PC-3 (cell line): ENCODE measurements at regions of chr1 and their contacts with region 1.

Region 1: GRCh38 chr1:205711104-205712020 is 31.1 kb upstream of the SLC45A3 start:
- DNase-seq: peak; percentile 93
- ATAC-seq: peak; percentile 86
- H3K4me3 ChIP-seq: no peak overlapping the region
- H3K27ac ChIP-seq: no peak overlapping the region
- H3K4me1 ChIP-seq: peaks cover 9% of the 10 kb centered on the region; the same call in 1 of the 2 replicates
- H3K27me3 ChIP-seq: no peaks in the 10 kb centered on the region
- CTCF ChIP-seq: peak; percentile 99

Region 2: DNA sequence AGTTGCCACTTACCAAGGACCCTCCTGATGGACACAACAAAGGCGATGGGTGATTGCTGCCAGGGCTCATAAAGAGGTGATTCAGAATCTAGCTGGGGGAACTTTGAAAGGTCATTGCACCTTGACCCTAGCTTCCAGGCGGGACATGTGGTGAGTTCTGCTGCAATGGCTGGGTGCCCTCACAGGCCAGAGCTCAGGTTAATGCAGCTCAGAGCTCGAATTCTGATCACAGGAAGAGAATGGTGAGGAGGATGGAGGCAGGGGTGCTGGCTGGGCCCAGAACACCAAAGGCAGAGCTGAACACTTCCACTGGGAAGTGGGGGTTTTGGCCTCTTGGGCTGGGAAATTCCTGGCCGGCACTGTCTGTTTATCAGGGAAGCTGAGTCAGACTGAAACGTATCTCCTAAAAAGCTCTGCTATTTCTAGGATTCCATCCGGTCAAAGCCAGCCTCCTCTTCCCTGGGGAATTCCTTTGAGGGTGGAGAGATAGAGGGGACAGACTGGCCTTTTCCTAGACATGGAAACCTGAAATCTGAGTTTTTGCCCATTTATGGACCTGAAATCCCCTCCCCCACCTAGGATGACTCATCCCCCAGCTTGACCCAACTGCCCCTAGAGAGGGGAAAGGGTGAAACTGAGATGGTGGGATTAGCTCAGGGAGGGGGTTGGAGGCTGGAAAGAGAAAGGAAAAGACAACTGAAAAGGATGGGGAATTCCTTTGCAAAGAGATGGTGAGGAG is 417.0 kb before region 1 on chr1:
- CTCF ChIA-PET with region 1: no interaction called
- POLR2A ChIA-PET with region 1: no interaction called
- intact Hi-C with region 1: no loop called
- DNase-seq: peak; percentile 87
- ATAC-seq: peak; percentile 67
- H3K4me3 ChIP-seq: no peak overlapping the region
- H3K27ac ChIP-seq: peak overlapping the region; percentile 73
- H3K4me1 ChIP-seq: peaks cover 44% of the 10 kb centered on the region
- H3K27me3 ChIP-seq: no peaks in the 10 kb centered on the region
- CTCF ChIP-seq: no peak

Region 3: DNA sequence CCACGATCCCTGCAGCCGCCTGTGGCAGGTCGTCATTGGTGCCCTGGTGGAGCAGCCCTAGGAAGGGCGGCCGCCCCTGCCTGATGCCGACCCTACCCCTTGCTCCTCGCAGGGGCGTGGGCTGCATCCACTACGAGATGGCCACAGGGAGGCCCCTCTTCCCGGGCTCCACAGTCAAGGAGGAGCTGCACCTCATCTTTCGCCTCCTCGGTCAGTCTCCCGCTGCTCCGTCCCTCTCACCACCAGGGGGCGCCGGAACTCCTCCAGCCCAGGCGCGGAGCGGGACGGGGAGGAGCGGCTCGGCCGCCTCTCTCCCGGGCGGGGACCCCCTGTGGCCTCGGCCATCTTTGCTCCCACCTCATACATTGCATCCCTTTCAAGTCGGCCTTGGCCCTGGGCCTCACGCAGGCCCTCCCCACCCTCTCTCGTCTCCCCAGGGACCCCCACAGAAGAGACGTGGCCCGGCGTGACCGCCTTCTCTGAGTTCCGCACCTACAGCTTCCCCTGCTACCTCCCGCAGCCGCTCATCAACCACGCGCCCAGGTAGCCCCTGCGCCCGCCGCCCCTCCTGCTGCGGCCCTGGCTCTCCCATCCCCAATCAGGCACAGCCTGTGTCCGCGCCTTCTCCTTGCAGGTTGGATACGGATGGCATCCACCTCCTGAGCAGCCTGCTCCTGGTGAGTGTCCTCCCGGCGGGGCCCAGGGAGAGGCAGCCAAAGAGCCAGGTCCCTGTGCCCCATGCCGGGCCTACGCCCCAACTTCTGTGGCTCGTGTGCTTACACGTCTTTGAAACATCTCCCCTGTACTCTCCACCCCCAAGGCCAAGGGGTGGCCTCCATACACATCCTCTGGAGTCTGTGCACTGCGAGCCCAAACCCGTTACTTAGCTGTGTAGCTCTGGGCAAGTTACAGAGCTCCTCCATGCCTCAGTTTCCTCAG is 182.2 kb before region 1 on chr1:
- CTCF ChIA-PET with region 1: interaction called, 6 read pairs
- POLR2A ChIA-PET with region 1: no interaction called
- intact Hi-C with region 1: loop called (anchors 1 kb)
- DNase-seq: peak; percentile 92
- ATAC-seq: peak; percentile 94
- H3K4me3 ChIP-seq: peak overlapping the region; percentile 60
- H3K27ac ChIP-seq: no peak overlapping the region
- H3K4me1 ChIP-seq: peaks cover 12% of the 10 kb centered on the region
- H3K27me3 ChIP-seq: no peaks in the 10 kb centered on the region
- CTCF ChIP-seq: peak; percentile 97

Region 4: DNA sequence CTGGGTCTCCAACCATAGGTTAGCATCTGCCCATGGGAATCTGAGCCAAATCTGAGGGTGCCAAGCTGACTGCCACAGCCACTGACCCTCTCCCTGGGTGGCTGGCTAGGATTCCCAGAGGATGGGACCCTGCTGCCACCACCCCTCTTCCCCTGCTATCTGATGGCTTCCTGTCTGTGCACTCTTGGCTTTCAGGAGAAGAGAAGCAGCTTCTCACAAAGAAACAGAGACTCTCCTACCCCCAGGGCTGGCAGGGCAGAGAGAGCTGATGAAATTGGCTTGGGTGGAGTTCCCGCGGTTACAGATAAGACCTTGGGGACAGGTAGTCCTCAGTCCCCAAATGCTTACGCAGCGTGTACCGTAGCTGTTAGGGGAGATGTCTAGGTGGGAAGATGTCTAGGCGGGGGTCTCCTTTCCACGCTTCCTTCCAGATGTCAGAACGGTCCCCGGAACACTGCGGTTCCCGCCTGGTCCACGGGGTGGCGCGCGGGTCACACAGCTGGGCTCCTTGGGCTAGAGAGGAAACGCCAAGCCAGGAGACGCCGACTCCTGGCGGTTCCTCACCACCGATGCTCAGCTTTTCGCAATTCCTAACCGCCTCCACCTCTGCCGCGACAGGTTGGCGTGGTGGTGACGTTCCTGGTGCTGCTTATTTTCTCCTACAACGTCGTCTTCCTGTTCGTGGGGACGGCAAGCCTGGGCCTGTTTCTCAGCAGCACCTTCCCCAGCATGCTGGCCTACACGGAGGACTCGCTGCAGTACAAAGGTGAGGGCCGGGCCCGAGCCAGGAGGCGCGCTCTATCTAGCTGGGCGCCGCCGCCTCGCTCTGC is 119.6 kb before region 1 on chr1:
- CTCF ChIA-PET with region 1: interaction called, 7 read pairs
- POLR2A ChIA-PET with region 1: interaction called, 20 read pairs
- intact Hi-C with region 1: loop called (anchors 2 kb)
- DNase-seq: peak; percentile 91
- ATAC-seq: peak; percentile 84
- H3K4me3 ChIP-seq: peak overlapping the region; percentile 63
- H3K27ac ChIP-seq: no peak overlapping the region
- H3K4me1 ChIP-seq: peaks cover 3% of the 10 kb centered on the region; the same call in 1 of the 2 replicates
- H3K27me3 ChIP-seq: no peaks in the 10 kb centered on the region
- CTCF ChIP-seq: peak; percentile 98

Region 5: GRCh38 chr1:205680073-205680851 is 31.1 kb before region 1 on chr1 and contains the start of gene SLC45A3:
- CTCF ChIA-PET with region 1: interaction called, 6 read pairs
- POLR2A ChIA-PET with region 1: no interaction called
- intact Hi-C with region 1: loop called (anchors 1 kb)
- DNase-seq: peak; percentile 51
- ATAC-seq: peak; percentile 70
- H3K4me3 ChIP-seq: peak within 1 kb of the TSS; percentile 72
- H3K27ac ChIP-seq: no peak within 1 kb of the TSS
- H3K4me1 ChIP-seq: peaks cover 27% of the 10 kb centered on the region
- H3K27me3 ChIP-seq: no peaks in the 10 kb centered on the region
- CTCF ChIP-seq: no peak
- total RNA-seq, gene SLC45A3: 33.2 and 37.6 TPM in 2 replicates

Region 6: DNA sequence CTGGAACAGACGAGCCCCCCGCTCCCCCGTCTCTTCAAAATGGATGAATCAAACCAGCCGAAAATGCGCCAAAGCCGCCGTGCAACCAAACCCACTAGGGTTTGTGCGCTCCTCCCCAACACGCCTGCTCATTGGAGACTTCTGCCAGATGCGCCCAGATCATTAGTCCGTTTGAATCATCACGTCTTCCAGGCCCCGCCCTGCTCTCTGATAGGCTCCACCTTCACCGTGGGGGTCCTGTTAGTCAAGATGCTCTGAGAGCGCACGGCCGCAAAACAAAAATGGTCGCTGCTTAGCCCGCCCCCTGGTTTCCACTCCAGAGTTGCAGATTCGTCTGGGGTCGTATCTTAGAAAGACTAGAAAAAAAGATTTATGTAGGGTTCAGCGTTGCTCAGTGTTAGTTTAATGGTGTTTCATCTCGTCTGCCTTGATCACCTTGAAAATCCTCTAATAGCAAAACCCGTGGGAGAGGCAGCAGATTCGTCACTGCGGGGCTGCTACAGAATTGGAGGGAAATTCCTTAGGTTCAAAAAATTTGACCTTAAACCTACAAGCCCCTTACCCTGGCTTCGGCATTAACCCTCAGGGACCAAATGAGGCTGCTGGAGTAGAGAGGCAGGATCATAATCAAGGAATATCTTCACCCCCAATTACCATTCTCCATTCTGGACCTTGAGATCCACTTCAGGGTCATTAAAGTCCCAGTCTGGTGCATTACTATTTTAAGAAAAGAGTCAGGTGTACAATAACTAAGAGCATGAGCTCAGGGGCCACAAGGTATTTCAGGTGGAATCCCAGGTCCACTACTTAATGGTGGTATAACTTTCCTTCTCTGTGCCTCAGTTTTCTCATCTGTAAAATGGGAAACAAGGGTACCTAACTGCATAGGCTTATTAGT is 39.0 kb after region 1 on chr1 and contains the start of gene NUCKS1:
- CTCF ChIA-PET with region 1: no interaction called
- POLR2A ChIA-PET with region 1: interaction called, 9 read pairs
- intact Hi-C with region 1: loop called (anchors 5 kb)
- DNase-seq: peak; percentile 99
- ATAC-seq: peak; percentile 78
- H3K4me3 ChIP-seq: peak within 1 kb of the TSS; percentile 86
- H3K27ac ChIP-seq: peak within 1 kb of the TSS; percentile 81
- H3K4me1 ChIP-seq: peaks cover 25% of the 10 kb centered on the region
- H3K27me3 ChIP-seq: no peaks in the 10 kb centered on the region
- CTCF ChIP-seq: no peak
- total RNA-seq, gene NUCKS1: 101 and 122 TPM in 2 replicates

Region 7: DNA sequence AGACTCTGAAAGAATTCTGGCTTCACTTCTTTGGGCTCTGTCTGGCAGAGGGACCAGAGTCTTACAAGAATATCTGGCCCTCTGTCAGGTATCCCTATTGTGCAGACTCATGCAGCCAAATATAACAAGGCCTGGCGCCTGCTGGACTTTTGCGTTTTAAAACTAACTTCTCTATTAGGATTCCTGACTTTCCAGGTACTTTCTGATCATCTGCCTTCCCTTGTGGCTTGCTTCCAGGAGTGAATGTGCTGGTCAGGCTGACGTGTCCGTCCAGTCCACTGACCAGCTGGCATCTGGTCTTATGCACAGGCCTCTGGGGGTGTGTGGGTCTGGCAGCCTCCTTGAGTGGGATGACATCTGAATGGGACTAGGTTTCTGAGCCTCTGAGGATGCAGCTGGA is 72.5 kb after region 1 on chr1:
- CTCF ChIA-PET with region 1: interaction called, 6 read pairs
- POLR2A ChIA-PET with region 1: interaction called, 18 read pairs
- intact Hi-C with region 1: no loop called
- DNase-seq: no peak
- ATAC-seq: no peak
- H3K4me3 ChIP-seq: no peak overlapping the region
- H3K27ac ChIP-seq: no peak overlapping the region
- H3K4me1 ChIP-seq: no peaks in the 10 kb centered on the region
- H3K27me3 ChIP-seq: no peaks in the 10 kb centered on the region
- CTCF ChIP-seq: no peak